BJ (cell line): ENCODE measurements at regions of chr1 and their contacts with region 1.

Region 1: DNA sequence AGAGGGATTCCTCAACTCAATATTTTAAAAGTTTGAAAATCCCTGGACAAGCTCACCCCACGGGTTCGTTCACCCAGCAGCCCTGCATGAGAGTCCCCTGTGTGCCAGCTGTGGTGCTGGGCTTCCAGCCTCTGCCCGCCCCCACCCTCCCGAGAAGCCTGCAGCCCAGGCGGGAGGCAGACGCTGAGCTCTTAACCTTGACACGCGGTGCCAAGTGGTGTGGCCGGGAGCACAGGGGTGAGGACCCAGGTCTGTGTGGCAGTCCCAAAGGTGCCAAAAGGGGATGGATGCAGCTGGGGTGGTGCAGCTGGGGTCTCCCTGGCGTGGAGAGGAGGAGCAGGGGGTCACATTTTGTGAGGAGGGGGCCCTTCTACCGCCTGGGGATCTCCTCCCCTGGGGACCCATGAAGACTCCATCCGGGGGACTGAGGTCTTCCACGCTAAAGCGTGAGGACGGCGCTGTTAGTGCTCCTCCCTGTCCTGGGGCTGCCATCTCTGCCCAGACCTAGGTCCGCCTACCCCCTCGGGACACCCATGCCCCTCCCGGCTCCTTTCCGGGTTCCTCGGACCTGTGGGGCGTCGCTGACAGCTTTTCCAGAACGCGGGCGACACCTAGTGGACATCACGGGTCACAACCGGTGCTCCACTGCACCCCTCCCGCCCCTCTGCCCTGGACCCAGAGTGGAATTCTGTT is 12.9 kb downstream of the PLA2G2F start:
- DNase-seq: no peak
- H3K4me3 ChIP-seq: peak overlapping the region; percentile 34
- H3K27me3 ChIP-seq: no peaks in the 10 kb centered on the region; the same call in 1 of the 2 replicates
- CTCF ChIP-seq: peak; percentile 92

Region 2: DNA sequence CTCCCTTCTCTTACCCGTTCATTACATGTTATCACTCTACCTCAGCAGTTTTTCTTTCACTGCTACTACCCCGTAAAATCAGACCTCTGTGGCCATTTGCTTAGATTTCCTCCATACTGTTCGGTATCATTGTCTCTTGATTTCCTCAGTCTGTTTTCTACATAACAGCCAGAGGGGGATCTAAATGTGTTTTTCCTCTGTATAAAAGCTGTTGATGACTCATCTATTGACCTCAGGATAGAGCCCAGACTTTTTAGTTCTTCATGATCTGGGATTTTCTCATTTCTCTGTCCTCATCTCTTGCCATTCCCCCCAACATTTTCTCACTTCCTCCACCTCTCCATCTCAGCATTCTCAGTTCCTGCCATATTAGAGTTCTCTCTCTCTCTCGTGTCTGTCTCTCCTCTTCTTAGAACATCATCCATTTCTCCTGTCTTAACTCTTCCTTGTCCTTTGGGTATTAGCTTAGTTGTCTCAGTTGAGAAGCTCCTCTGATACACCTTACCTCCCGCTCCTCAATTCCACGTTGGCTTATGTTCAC is 259.4 kb before region 1 on chr1:
- CTCF ChIA-PET with region 1: no interaction called
- POLR2A ChIA-PET with region 1: no interaction called
- DNase-seq: no peak
- H3K4me3 ChIP-seq: no peak overlapping the region
- H3K27me3 ChIP-seq: no peaks in the 10 kb centered on the region
- CTCF ChIP-seq: no peak

Region 3: DNA sequence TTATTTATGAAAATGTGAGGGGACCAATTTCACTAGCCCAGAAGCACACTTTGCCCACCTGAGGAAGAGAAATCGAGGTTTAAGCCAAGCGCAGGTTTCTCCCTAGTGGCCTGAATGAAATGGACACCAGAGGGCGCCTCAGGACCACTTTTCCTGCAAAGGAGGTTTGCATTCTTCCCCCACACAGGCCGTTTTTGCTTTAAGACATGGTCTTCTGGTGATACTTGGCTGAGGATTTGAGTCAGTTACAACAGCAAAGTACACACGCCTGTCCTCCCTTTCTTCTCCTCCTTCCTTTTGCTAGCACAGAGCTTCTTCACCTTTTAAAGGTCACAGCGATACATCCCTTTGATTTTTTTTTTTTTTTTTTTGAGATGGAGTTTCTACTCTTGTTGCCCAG is 234.0 kb before region 1 on chr1:
- CTCF ChIA-PET with region 1: interaction called, 49 read pairs
- POLR2A ChIA-PET with region 1: no interaction called
- DNase-seq: no peak
- H3K4me3 ChIP-seq: no peak overlapping the region
- H3K27me3 ChIP-seq: no peaks in the 10 kb centered on the region
- CTCF ChIP-seq: peak; percentile 88

Region 4: GRCh38 chr1:20100632-20101355 is 51.3 kb before region 1 on chr1:
- CTCF ChIA-PET with region 1: interaction called, 26 read pairs
- POLR2A ChIA-PET with region 1: no interaction called
- DNase-seq: no peak
- H3K4me3 ChIP-seq: no peak overlapping the region
- H3K27me3 ChIP-seq: no peaks in the 10 kb centered on the region; the same call in 1 of the 2 replicates
- CTCF ChIP-seq: peak; percentile 67

Region 5: DNA sequence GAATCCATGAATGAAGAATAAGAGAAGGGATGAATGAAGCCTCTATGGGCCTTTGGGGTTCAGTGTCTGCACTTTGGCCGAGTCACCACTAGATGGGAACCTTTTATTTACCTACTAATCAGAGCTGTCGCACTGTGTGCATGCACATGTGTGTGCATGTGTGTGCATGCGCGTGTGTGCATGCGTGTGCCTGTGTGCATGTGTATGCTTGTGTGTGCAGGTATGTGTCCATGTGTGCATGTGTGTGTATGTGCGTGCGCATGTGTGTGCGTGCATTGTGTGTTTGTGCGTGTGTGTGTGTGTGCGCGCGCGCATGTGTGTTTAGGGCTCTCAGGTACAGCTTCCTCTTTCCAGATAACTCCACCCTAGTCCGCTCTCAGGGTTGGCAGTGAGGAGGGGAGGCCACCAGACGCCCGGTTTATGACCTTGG is 13.5 kb after region 1 on chr1:
- CTCF ChIA-PET with region 1: interaction called, 22 read pairs
- POLR2A ChIA-PET with region 1: no interaction called
- DNase-seq: no peak
- H3K4me3 ChIP-seq: no peak overlapping the region
- H3K27me3 ChIP-seq: peaks cover 6% of the 10 kb centered on the region
- CTCF ChIP-seq: no peak

Region 6: DNA sequence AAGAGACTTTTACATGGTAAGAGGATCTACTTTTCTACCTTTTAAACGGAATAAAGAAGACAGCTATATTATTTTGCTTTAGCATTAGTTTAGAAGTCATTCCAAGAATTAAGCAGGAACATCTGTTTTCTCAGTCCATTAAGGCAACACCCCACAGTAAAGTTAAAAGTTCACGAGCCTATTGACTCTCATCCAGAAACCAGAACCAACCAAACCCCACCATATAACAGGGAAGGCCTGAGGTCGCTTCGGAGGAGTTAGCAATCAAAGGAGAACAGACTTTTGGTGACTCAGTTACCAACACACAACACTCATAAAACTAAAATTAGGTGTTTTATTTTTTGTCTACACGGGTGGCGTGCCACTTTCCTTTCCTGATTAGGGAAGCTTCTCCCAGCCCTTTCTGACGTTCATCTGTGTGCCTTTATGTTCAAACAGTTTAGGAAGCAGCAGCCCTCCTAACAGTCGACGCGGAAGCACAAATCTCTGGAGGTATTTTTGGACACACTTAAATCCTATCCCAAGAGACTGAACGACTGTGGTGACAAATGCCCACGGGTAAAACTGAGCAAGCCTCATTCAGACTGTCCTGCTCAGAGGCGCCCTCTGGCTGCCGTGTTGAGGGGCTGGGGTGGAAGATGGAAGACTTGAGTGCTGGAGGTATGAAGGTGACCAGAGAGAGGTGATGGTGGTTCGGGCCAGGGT is 42.9 kb after region 1 on chr1:
- CTCF ChIA-PET with region 1: interaction called, 13 read pairs
- POLR2A ChIA-PET with region 1: no interaction called
- DNase-seq: no peak
- H3K4me3 ChIP-seq: no peak overlapping the region
- H3K27me3 ChIP-seq: peaks cover 11% of the 10 kb centered on the region
- CTCF ChIP-seq: peak; percentile 92